ENCODE measurements at regions of chr19 and their contacts with region 1.

Region 1: DNA sequence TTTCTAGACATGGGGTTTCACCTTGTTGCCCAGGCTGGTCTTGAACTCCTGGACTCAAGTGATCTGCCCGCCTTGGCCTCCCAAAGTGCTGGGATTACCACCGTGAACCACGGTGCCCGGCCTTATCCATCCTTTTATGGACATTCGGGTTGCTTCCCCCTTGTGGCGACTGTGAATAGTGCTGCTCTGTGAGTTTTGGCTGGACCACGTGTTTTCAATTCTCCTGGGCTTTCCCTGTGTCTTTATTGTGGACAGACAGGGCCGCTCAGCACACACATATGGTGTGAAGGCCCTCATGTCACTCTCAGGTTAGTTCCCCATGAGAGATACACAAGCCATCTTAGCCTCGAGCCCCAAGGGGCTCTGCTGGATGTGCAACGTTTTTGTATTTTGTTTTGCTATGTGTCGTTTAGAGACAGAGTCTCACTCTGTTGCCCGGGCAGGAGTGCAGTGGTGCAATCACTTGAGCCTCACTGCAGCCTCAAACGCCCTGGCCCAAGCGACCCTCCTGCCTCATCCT is 40.5 kb downstream of the MAU2 start:
- DNase-seq: peak; percentile 40
- H3K4me3 ChIP-seq: no peak overlapping the region
- CTCF ChIP-seq: peak; percentile 75

Region 2: GRCh38 chr19:19348266-19348665 is 12.9 kb before region 1 on chr19:
- CTCF ChIA-PET with region 1: interaction called, 31 read pairs
- POLR2A ChIA-PET with region 1: no interaction called
- DNase-seq: no peak
- H3K4me3 ChIP-seq: no peak overlapping the region
- CTCF ChIP-seq: no peak

Region 3: GRCh38 chr19:19372656-19373416 is 11.7 kb after region 1 on chr19:
- CTCF ChIA-PET with region 1: interaction called, 41 read pairs
- POLR2A ChIA-PET with region 1: no interaction called
- DNase-seq: no peak
- H3K4me3 ChIP-seq: no peak overlapping the region
- CTCF ChIP-seq: no peak

Measured in AG04449 (cell line).